ENCODE measurements at regions of chr11 and their contacts with region 1.

Region 1: DNA sequence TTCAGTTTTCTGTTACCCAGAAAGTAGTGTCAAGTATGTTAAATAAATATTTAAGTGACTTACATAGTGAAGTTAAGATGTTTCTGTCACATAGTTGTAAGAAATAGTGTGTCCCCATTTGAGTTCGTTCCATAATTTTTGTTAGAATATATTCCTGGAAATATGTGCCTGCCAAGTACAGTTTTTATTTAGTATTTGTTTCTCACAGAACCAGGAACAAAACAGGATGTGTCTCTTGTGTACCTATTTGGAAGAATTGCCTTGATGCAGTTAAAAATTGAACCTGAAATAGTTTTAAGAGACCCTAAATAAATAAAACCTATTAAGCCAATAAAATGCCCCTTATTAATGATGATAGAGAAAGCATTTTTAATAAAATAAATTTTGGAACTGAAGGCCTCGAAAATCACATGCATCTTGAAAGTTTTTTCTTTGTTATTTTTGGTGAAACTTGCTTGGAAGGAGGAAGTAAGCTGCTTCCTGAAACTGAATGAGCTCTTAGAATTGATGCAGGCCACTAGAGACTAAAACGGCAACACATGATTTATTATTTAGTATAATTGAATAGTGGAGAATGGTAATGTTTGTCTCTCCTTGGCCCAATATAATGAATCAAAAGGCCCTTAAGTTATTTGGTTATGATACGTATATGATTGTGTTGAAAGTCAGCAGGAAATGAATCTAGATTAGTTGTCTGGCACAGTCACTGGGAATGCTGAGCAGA is 55.9 kb downstream of the SWAP70 start:
- DNase-seq: no peak
- ATAC-seq: no peak
- H3K4me3 ChIP-seq: no peak overlapping the region
- H3K27ac ChIP-seq: no peak overlapping the region
- H3K4me1 ChIP-seq: peaks cover 15% of the 10 kb centered on the region
- H3K27me3 ChIP-seq: no peaks in the 10 kb centered on the region
- CTCF ChIP-seq: no peak

Region 2: DNA sequence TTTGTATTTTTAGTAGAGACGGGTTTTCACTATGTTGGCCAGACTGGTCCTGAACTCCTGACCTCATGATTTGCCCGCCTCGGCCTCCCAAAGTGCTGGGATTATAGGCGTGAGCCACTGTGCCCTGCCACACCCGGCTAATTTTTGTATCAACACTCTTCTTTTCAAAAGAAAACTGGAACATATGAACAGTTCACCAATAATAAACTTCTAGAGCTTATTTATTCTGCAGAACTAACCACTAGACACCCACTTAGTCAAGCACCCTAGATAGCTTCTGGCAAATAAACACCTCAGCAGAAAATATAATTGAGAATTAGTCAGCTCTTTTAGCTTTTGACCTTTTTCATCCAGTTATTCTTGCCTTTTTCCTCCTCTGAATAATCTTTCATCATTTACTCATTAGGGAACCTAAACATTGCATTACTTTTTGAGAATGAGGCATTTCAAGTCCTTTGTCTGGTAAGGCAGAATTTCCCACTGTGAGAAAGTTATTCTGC is 378.0 kb before region 1 on chr11:
- CTCF ChIA-PET with region 1: no interaction called
- POLR2A ChIA-PET with region 1: no interaction called
- in situ Hi-C with region 1: no loop called
- intact Hi-C with region 1: no loop called
- DNase-seq: no peak
- ATAC-seq: no peak
- H3K4me3 ChIP-seq: no peak overlapping the region
- H3K27ac ChIP-seq: no peak overlapping the region
- H3K4me1 ChIP-seq: no peaks in the 10 kb centered on the region
- H3K27me3 ChIP-seq: no peaks in the 10 kb centered on the region
- CTCF ChIP-seq: no peak

Region 3: DNA sequence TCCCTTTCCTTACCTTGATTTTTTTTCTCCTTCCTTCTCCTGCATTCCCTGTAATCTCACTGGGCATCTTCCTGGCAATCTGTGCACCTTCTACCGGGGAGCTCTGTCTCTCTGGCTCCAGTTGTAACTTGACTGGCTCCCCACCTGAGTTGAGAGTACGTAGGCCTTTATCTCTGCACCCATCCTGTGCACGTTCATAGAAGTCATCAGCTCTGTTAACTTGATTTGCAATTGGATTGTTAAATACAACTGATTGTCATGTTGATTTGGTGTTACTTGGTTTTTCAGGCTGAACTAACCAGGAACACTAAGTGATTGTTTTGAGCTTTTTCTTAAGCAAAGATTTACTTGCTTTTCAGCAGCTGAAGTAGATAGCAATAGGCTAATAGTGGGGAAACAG is 44.0 kb before region 1 on chr11:
- CTCF ChIA-PET with region 1: no interaction called
- POLR2A ChIA-PET with region 1: no interaction called
- in situ Hi-C with region 1: loop called (anchors 5 kb)
- intact Hi-C with region 1: no loop called
- DNase-seq: no peak
- ATAC-seq: no peak
- H3K4me3 ChIP-seq: no peak overlapping the region
- H3K27ac ChIP-seq: peak overlapping the region; percentile 6; the same call in 1 of the 2 replicates
- H3K4me1 ChIP-seq: peaks cover 5% of the 10 kb centered on the region; the same call in 1 of the 2 replicates
- H3K27me3 ChIP-seq: no peaks in the 10 kb centered on the region
- CTCF ChIP-seq: no peak

Region 4: GRCh38 chr11:9951714-9952275 is 232.1 kb after region 1 on chr11:
- CTCF ChIA-PET with region 1: no interaction called
- POLR2A ChIA-PET with region 1: no interaction called
- in situ Hi-C with region 1: no loop called
- intact Hi-C with region 1: no loop called
- DNase-seq: no peak
- ATAC-seq: no peak
- H3K4me3 ChIP-seq: no peak overlapping the region
- H3K27ac ChIP-seq: peak overlapping the region; percentile 75
- H3K4me1 ChIP-seq: peaks cover 15% of the 10 kb centered on the region
- H3K27me3 ChIP-seq: no peaks in the 10 kb centered on the region
- CTCF ChIP-seq: no peak

Measured in Panc1 (cell line).